T-cell (primary cell): ENCODE measurements at regions of chr13 and their contacts with region 1.

Region 1: GRCh38 chr13:68535329-68535728 is 1305.2 kb upstream of the PCDH9 start:
- DNase-seq: no peak
- ATAC-seq: no peak
- H3K4me3 ChIP-seq: no peak overlapping the region
- H3K4me3 Mint-ChIP-seq: no peak overlapping the region
- H3K27ac ChIP-seq: no peak overlapping the region
- H3K27ac Mint-ChIP-seq: no peak overlapping the region
- H3K4me1 ChIP-seq: no peaks in the 10 kb centered on the region
- H3K4me1 Mint-ChIP-seq: no peaks in the 10 kb centered on the region
- H3K27me3 ChIP-seq: no peaks in the 10 kb centered on the region
- H3K27me3 Mint-ChIP-seq: no peaks in the 10 kb centered on the region

Region 2: DNA sequence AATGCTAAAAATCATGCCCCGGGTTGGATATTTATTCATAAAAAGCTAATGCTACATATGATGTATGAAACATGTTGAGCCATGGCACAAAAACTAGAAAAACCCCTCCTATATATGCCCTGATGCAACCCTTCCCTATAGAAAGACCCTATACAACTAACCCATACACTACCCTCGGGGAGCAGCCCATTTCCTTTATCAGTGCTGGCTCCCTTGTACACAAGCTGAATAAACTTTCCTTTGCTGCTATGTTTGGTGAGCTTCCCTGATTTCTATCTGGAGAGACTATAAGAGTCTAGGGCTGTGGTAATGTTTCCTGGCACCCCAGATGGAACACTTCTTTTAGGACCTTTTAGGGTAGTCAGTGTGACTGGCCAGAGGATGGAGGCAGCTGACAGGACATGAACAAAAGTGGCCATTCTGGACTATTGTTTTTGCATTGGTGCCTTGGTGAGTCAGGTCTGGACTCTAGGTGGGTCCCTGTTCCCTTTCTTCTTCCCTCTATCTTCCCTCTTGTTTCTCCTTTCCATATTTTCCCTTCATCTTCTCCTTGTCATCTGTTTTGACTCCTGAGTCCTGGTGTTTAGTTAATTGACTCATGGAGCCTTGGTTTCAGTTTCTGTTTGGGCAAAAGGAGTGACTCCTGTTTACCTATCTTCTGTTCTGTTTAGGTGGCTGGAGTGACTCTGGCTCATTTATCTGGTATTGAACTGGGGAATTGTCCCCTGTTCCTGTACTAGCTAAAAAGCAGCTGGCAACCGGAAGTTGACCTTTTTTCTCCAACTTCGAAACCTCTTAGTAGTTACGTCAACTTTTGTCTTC is 16.6 kb after region 1 on chr13:
- CTCF ChIA-PET with region 1: no interaction called
- POLR2A ChIA-PET with region 1: interaction called in 1 of 2 experiments, 11 read pairs
- DNase-seq: no peak
- ATAC-seq: no peak
- H3K4me3 ChIP-seq: no peak overlapping the region
- H3K4me3 Mint-ChIP-seq: no peak overlapping the region
- H3K27ac ChIP-seq: no peak overlapping the region
- H3K27ac Mint-ChIP-seq: no peak overlapping the region
- H3K4me1 ChIP-seq: no peaks in the 10 kb centered on the region
- H3K4me1 Mint-ChIP-seq: no peaks in the 10 kb centered on the region
- H3K27me3 ChIP-seq: no peaks in the 10 kb centered on the region
- H3K27me3 Mint-ChIP-seq: no peaks in the 10 kb centered on the region

Region 3: GRCh38 chr13:68715651-68716050 is 180.3 kb after region 1 on chr13:
- CTCF ChIA-PET with region 1: no interaction called
- POLR2A ChIA-PET with region 1: no interaction called
- DNase-seq: no peak
- ATAC-seq: no peak
- H3K4me3 ChIP-seq: no peak overlapping the region
- H3K4me3 Mint-ChIP-seq: no peak overlapping the region
- H3K27ac ChIP-seq: no peak overlapping the region
- H3K27ac Mint-ChIP-seq: no peak overlapping the region
- H3K4me1 ChIP-seq: no peaks in the 10 kb centered on the region
- H3K4me1 Mint-ChIP-seq: no peaks in the 10 kb centered on the region
- H3K27me3 ChIP-seq: no peaks in the 10 kb centered on the region
- H3K27me3 Mint-ChIP-seq: no peaks in the 10 kb centered on the region